Mammary epithelial cell (primary cell): ENCODE measurements at regions of chr4 and their contacts with region 1.

Region 1: DNA sequence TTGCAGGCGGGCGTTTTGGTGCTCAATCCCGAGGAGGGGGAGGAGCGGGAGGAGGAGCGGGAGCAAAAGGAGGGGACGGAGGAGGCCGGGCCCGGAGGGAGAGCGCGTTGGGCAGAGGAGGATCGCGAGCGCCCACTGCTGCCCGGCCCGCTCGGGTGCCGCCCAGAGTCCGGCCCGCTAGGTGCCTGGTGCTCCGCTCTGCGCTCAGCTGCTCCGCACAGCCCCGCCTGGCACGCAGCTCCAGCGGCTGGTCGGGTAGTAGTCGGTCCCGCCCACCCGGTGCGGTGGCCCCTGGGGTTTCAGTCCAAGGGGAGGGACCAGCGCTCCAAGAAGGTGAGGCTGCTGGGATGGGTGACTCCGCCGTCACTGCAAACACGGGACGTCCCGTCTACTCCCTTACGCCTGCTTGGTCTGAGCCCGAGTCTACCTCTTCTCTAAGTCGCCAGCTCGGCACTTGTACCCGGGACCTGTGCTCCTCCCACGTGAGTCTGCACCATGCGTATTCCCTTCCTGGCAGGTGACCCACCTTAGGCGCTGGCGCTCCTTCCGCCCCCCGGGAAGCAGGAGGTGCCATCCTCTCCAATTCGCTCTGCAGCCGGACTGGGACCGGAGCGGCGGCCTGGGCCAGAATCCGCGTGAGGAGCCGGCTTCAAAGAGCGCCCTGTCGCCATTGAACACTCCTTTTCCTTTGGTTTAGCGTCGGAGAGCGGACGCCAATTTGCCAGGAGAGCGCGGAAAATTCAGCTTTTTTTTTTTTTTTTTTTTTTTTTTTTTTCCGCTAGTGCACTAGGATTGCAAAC is 405 bp upstream of the HS3ST1 start:
- DNase-seq: peak; percentile 96
- H3K4me3 ChIP-seq: peak overlapping the region; percentile 78 to 83 (median 82)
- H3K27ac ChIP-seq: peak overlapping the region; percentile 84
- H3K4me1 ChIP-seq: peaks cover 39% of the 10 kb centered on the region
- H3K27me3 ChIP-seq: no peaks in the 10 kb centered on the region
- CTCF ChIP-seq: peak; percentile 62 to 95

Region 2: GRCh38 chr4:10893395-10893794 is 535.7 kb before region 1 on chr4:
- CTCF ChIA-PET with region 1: no interaction called
- dilution Hi-C with region 1: no loop called
- in situ Hi-C with region 1: no loop called
- intact Hi-C with region 1: loop called (anchors 5 kb)
- DNase-seq: peak; percentile 1
- H3K4me3 ChIP-seq: no peak overlapping the region
- H3K27ac ChIP-seq: no peak overlapping the region
- H3K4me1 ChIP-seq: no peaks in the 10 kb centered on the region
- H3K27me3 ChIP-seq: no peaks in the 10 kb centered on the region
- CTCF ChIP-seq: peak; percentile 6 to 43

Region 3: GRCh38 chr4:11376571-11376970 is 52.5 kb before region 1 on chr4:
- CTCF ChIA-PET with region 1: no interaction called
- dilution Hi-C with region 1: no loop called
- in situ Hi-C with region 1: no loop called
- intact Hi-C with region 1: no loop called
- DNase-seq: no peak
- H3K4me3 ChIP-seq: no peak overlapping the region
- H3K27ac ChIP-seq: no peak overlapping the region
- H3K4me1 ChIP-seq: no peaks in the 10 kb centered on the region
- H3K27me3 ChIP-seq: no peaks in the 10 kb centered on the region
- CTCF ChIP-seq: no peak

Region 4: GRCh38 chr4:11455201-11455835 is 26.2 kb after region 1 on chr4:
- CTCF ChIA-PET with region 1: no interaction called
- dilution Hi-C with region 1: no loop called
- in situ Hi-C with region 1: no loop called
- intact Hi-C with region 1: loop called (anchors 1 kb)
- DNase-seq: no peak
- H3K4me3 ChIP-seq: no peak overlapping the region
- H3K27ac ChIP-seq: no peak overlapping the region
- H3K4me1 ChIP-seq: peaks cover 11% of the 10 kb centered on the region
- H3K27me3 ChIP-seq: no peaks in the 10 kb centered on the region
- CTCF ChIP-seq: no peak

Region 5: GRCh38 chr4:11614399-11614798 is 185.3 kb after region 1 on chr4:
- CTCF ChIA-PET with region 1: no interaction called
- dilution Hi-C with region 1: loop called (anchors 5 kb)
- in situ Hi-C with region 1: no loop called
- intact Hi-C with region 1: no loop called
- DNase-seq: peak; percentile 87
- H3K4me3 ChIP-seq: no peak overlapping the region
- H3K27ac ChIP-seq: peak overlapping the region; percentile 77
- H3K4me1 ChIP-seq: peaks cover 28% of the 10 kb centered on the region
- H3K27me3 ChIP-seq: no peaks in the 10 kb centered on the region
- CTCF ChIP-seq: no peak

Region 6: GRCh38 chr4:11720292-11720691 is 291.2 kb after region 1 on chr4:
- CTCF ChIA-PET with region 1: no interaction called
- dilution Hi-C with region 1: no loop called
- in situ Hi-C with region 1: loop called (anchors 25 kb)
- intact Hi-C with region 1: loop called (anchors 1 kb)
- DNase-seq: peak; percentile 43
- H3K4me3 ChIP-seq: no peak overlapping the region
- H3K27ac ChIP-seq: peak overlapping the region; percentile 6
- H3K4me1 ChIP-seq: peaks cover 7% of the 10 kb centered on the region
- H3K27me3 ChIP-seq: no peaks in the 10 kb centered on the region
- CTCF ChIP-seq: peak; percentile 89 to 95